ENCODE measurements at regions of chr2 and their contacts with region 1.

Region 1: GRCh38 chr2:230872968-230873475 is 8.3 kb downstream of the ITM2C start:
- DNase-seq: no peak
- ATAC-seq: no peak
- H3K4me3 ChIP-seq: no peak overlapping the region
- H3K27ac ChIP-seq: no peak overlapping the region
- H3K4me1 ChIP-seq: peaks cover 6% of the 10 kb centered on the region; the same call in 1 of the 2 replicates
- H3K27me3 ChIP-seq: no peaks in the 10 kb centered on the region
- CTCF ChIP-seq: no peak
- POLR2A ChIP-seq: no peak
- RAD21 ChIP-seq: no peak

Region 2: DNA sequence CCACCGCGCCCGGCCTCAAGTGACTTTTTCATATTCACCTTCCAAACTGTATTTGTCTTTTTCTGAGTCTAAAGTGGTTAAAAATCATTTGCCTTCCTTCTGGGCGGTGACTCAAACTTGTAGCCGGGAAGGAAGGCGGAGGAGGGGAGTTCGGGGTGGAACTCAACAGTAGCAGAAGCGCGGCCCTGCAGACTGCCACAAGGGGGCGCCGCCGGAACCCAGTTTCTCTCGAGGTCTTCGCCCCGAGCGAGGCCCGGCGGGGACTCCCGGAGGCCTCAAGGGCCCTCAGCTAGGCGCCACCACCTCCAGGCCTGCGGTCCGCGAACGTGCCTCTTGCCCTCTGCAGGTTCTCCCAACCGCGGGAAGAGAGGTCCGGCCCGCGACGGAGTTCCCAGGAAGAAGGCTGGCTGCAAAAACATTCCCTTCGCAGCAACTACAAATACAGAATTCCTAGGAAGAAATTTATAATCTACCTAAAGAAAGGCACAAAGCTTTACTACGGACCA is 25.1 kb before region 1 on chr2:
- CTCF ChIA-PET with region 1: no interaction called
- POLR2A ChIA-PET with region 1: interaction called, 10 read pairs
- dilution Hi-C with region 1: no loop called
- in situ Hi-C with region 1: no loop called
- intact Hi-C with region 1: no loop called
- DNase-seq: peak; percentile 77
- ATAC-seq: peak; percentile 100
- H3K4me3 ChIP-seq: no peak overlapping the region
- H3K27ac ChIP-seq: no peak overlapping the region
- H3K4me1 ChIP-seq: no peaks in the 10 kb centered on the region
- H3K27me3 ChIP-seq: peaks cover 13% of the 10 kb centered on the region
- CTCF ChIP-seq: peak; percentile 85
- POLR2A ChIP-seq: no peak
- RAD21 ChIP-seq: peak; percentile 55

Region 3: GRCh38 chr2:230913406-230914143 is 40.6 kb after region 1 on chr2:
- CTCF ChIA-PET with region 1: no interaction called
- POLR2A ChIA-PET with region 1: no interaction called
- dilution Hi-C with region 1: no loop called
- in situ Hi-C with region 1: no loop called
- intact Hi-C with region 1: no loop called
- DNase-seq: no peak
- ATAC-seq: no peak
- H3K4me3 ChIP-seq: no peak overlapping the region
- H3K27ac ChIP-seq: no peak overlapping the region
- H3K4me1 ChIP-seq: peaks cover 2% of the 10 kb centered on the region; the same call in 1 of the 2 replicates
- H3K27me3 ChIP-seq: peaks cover 19% of the 10 kb centered on the region
- CTCF ChIP-seq: peak; percentile 31; the same call in 1 of the 2 replicates
- POLR2A ChIP-seq: no peak
- RAD21 ChIP-seq: peak; percentile 31; the same call in 1 of the 2 replicates